MCF 10A (cell line): ENCODE measurements at regions of chrX and their contacts with region 1.

Region 1: GRCh38 chrX:49754233-49754857 is 58.6 kb upstream of the PAGE1 start:
- DNase-seq: peak; percentile 46
- H3K4me3 Mint-ChIP-seq: no peak overlapping the region
- H3K27ac Mint-ChIP-seq: no peak overlapping the region
- H3K4me1 Mint-ChIP-seq: no peaks in the 10 kb centered on the region
- H3K27me3 Mint-ChIP-seq: peaks cover 83% of the 10 kb centered on the region
- CTCF ChIP-seq: peak; percentile 77

Region 2: DNA sequence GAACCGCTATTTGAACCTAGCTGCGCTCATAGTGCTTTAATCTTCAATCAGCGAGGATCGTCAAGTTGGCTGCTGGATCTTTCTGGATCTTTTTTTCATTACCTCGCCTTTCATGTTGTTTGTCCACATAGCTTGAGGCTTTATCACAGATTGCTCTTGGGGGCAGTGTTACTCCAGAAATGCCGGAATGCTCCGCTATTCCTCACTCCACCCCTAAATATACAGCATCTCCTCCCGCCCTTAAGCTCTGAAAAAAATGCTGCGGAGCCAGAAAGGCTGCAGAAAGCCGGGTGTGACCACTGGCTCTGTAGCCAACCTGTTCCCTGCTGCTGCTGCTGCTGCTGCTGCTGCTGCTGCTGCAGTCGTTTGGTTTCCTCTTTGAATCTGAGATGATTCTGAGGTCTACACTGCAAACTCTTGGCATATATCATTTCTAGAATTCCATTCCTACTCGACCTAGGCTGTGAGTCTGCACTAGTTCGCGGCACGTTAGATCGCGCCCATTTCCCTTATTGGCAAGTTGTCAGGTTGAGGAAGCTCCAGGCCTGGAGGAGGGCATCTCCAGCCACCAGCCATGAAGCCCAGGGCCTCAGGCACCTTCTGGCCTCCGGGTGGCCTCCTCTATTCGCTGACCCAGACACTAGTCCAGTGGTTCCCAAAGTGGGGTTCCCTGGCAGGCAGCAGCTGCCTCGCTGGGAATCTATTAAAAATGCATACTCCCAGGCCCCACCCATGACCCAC is 1122.8 kb before region 1 on chrX:
- CTCF ChIA-PET with region 1: no interaction called
- POLR2A ChIA-PET with region 1: no interaction called
- intact Hi-C with region 1: loop called (anchors 5 kb)
- DNase-seq: peak; percentile 89
- H3K4me3 Mint-ChIP-seq: peak overlapping the region; percentile 10
- H3K27ac Mint-ChIP-seq: no peak overlapping the region
- H3K4me1 Mint-ChIP-seq: no peaks in the 10 kb centered on the region
- H3K27me3 Mint-ChIP-seq: no peaks in the 10 kb centered on the region
- CTCF ChIP-seq: peak; percentile 48

Region 3: DNA sequence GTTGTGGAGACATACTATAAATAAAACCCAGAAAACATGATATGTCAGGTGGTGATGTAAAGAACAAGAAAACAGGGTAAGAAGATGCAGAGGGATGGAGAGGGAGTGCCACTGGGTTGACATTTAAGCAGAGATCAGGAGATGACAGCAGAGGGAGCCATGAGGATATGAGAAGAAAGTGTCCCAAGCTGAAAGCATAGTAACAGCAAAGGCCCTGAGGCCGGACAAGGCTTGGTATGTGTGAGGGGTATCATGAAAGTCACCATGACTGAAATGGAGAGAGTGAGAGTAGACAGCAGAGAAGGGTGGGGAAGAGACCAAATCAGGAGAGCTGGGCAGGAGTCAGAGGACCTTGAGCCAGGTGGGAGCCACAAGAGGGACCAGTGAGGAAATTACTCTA is 634.2 kb before region 1 on chrX:
- CTCF ChIA-PET with region 1: no interaction called
- POLR2A ChIA-PET with region 1: no interaction called
- intact Hi-C with region 1: loop called (anchors 10 kb)
- DNase-seq: no peak
- H3K4me3 Mint-ChIP-seq: no peak overlapping the region
- H3K27ac Mint-ChIP-seq: no peak overlapping the region
- H3K4me1 Mint-ChIP-seq: no peaks in the 10 kb centered on the region
- H3K27me3 Mint-ChIP-seq: no peaks in the 10 kb centered on the region
- CTCF ChIP-seq: no peak

Region 4: GRCh38 chrX:49199906-49200771 is 554.2 kb before region 1 on chrX and contains the start of gene SYP:
- CTCF ChIA-PET with region 1: interaction called, 10 read pairs
- POLR2A ChIA-PET with region 1: no interaction called
- intact Hi-C with region 1: loop called (anchors 10 kb)
- DNase-seq: peak; percentile 80
- H3K4me3 Mint-ChIP-seq: peak within 1 kb of the TSS; percentile 39
- H3K27ac Mint-ChIP-seq: no peak within 1 kb of the TSS
- H3K4me1 Mint-ChIP-seq: no peaks in the 10 kb centered on the region
- H3K27me3 Mint-ChIP-seq: peaks cover 15% of the 10 kb centered on the region
- CTCF ChIP-seq: no peak
- total RNA-seq, gene SYP: 0.75 and 0.79 TPM in 2 replicates

Region 5: DNA sequence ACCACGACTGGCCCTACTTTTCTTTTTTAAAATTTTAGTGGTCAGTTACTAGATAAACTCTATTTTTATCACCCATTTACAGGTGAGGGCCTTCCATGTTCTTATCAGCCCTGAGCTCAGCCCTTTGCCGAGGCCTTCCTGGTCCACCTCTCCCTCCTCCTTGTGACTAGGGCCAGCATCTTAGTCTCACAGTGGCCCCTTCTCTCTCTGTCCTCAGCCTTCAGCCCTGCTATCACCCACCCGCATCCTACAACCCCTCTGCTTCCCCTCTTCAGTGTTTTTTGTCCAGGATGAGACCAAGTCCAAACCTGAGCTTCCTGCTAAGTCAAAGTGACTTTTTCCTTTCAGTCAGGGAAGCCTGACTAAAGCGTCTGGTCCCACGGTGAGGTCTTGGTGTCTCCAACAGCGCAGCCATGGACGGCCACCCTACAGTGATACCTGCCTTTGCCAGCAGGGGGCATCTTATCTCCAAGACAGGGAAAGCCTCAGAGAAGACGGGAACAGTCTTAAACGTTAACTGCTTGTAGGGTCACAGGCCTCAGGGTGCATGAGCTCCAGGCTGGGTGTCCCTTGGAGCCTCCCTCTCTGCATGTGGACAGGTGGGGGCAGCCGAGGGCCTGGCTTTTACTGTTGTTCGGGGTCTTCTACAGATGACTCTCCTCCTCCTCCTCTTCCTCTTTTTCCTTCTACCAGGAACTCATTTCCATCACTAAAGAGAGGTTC is 462.6 kb before region 1 on chrX:
- CTCF ChIA-PET with region 1: interaction called, 4 read pairs
- POLR2A ChIA-PET with region 1: no interaction called
- intact Hi-C with region 1: loop called (anchors 1 kb)
- DNase-seq: peak; percentile 57
- H3K4me3 Mint-ChIP-seq: no peak overlapping the region
- H3K27ac Mint-ChIP-seq: no peak overlapping the region
- H3K4me1 Mint-ChIP-seq: no peaks in the 10 kb centered on the region
- H3K27me3 Mint-ChIP-seq: peaks cover 13% of the 10 kb centered on the region
- CTCF ChIP-seq: peak; percentile 52